Stomach (tissue), 19 donors: ENCODE measurements at regions of chr16 and their contacts with region 1.

Region 1: GRCh38 chr16:67935402-67936123 is 1.1 kb downstream of the PSMB10 start:
- DNase-seq: peak; percentile 97 to 99
- H3K4me3 ChIP-seq: peak overlapping the region; percentile 75 to 89 (median 88)
- H3K27ac ChIP-seq: peak overlapping the region; percentile 81 to 99 (median 97)
- H3K4me1 ChIP-seq: peaks cover 27 to 39% (median 36%) of the 10 kb centered on the region in 4 donors
- H3K27me3 ChIP-seq: no peaks in the 10 kb centered on the region
- CTCF ChIP-seq: peak in 1 of 7 experiments; percentile 17
- EP300 ChIP-seq: no peak
- POLR2A ChIP-seq: no peak

Region 2: DNA sequence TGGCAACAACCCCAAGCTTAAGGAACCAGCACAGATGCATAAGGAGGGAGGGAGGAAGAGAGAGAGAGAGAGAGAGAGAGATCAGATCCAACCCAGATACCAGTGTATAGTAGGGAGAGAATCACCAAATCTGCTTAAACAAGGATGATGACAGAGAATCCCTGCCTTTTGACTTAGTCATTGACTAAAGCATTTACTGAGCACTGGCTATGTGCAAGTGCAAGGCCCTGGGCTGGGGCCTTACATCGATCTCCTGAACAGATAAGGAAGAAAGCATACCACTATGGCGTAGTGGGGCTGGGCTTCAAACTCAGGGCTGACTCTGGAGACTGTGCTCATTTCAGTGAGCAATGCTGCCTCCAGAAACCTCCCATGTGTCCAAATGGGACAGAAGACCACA is 113.1 kb before region 1 on chr16:
- intact Hi-C with region 1: loop called (anchors 10 kb)
- DNase-seq: no peak
- H3K4me3 ChIP-seq: no peak overlapping the region
- H3K27ac ChIP-seq: no peak overlapping the region
- H3K4me1 ChIP-seq: no peaks in the 10 kb centered on the region
- H3K27me3 ChIP-seq: no peaks in the 10 kb centered on the region
- CTCF ChIP-seq: no peak
- EP300 ChIP-seq: no peak
- POLR2A ChIP-seq: no peak

Region 3: GRCh38 chr16:68448360-68448970 is 512.9 kb after region 1 on chr16 and contains the start of gene SMPD3:
- intact Hi-C with region 1: no loop called
- DNase-seq: peak; percentile 99
- H3K4me3 ChIP-seq: peak within 1 kb of the TSS; percentile 53 to 77 (median 66)
- H3K27ac ChIP-seq: peak within 1 kb of the TSS in 2 of 5 donors; percentile 37 to 60
- H3K4me1 ChIP-seq: peaks cover 18 to 32% (median 26%) of the 10 kb centered on the region in 4 donors
- H3K27me3 ChIP-seq: peaks cover 0 to 25% (median 4%) of the 10 kb centered on the region in 3 donors
- CTCF ChIP-seq: peak in 2 of 7 experiments; percentile 10 to 11
- EP300 ChIP-seq: no peak
- POLR2A ChIP-seq: no peak
- total RNA-seq, gene SMPD3: 34.3 to 110 (median 76.3) TPM